Caco-2 (cell line): ENCODE measurements at regions of chrX and their contacts with region 1.

Region 1: DNA sequence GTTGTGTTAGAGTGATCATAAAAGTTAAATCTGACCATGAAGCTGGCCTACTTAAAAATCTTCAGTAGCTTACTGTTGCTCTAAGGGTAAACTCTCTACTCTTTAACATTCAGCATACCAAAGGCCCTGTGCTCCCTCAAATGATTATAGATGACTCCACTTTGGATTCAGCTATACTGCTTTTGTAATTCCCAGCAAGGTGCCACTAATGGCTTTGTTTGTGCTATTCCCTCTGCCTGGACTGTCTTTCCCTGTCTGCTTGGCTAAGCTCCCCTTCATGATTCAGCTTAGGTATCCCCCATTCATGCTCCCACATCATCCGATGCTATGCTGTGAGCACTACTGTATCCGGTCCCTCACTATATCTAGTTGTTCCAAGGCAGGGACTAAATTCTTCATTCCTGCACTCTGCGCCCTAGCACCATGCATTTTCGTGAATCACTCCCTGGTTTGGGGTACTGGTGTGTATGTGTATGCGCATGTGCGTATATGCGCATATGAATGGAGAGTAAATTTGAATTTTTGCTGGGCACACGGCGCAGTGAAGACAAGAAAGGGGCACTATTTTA is 453 bp upstream of the PBDC1 start:
- DNase-seq: no peak
- H3K4me3 ChIP-seq: peak overlapping the region; percentile 73
- H3K4me3 Mint-ChIP-seq: peak overlapping the region; percentile 97
- H3K27ac Mint-ChIP-seq: peak overlapping the region; percentile 97
- H3K4me1 ChIP-seq: no peaks in the 10 kb centered on the region
- H3K4me1 Mint-ChIP-seq: no peaks in the 10 kb centered on the region
- H3K27me3 ChIP-seq: no peaks in the 10 kb centered on the region
- H3K27me3 Mint-ChIP-seq: no peaks in the 10 kb centered on the region
- CTCF ChIP-seq: no peak

Region 2: DNA sequence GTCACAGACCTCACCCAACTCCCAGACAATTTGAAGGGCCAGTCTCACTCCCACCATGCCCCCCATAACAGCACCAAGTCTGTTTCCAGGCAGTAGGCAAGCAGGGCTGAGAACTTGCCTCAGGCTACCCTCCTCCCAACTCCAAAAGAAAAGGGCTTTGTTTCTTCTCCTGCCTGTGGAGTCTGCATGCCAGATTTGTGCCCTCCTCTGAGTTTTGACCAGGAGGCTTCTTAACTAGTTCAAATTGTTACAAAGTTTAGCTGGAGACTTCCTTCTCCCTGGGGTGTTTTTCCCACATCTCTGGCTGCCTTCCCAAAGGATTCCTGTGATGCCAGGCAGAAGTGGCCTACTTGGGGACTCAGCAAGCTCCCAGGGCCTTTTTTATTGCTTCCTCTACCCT is 30.1 kb after region 1 on chrX:
- CTCF ChIA-PET with region 1: no interaction called
- POLR2A ChIA-PET with region 1: no interaction called
- intact Hi-C with region 1: loop called (anchors 2 kb)
- DNase-seq: no peak
- H3K4me3 ChIP-seq: no peak overlapping the region
- H3K4me3 Mint-ChIP-seq: no peak overlapping the region
- H3K27ac Mint-ChIP-seq: no peak overlapping the region
- H3K4me1 ChIP-seq: peaks cover 3% of the 10 kb centered on the region
- H3K4me1 Mint-ChIP-seq: no peaks in the 10 kb centered on the region
- H3K27me3 ChIP-seq: no peaks in the 10 kb centered on the region
- H3K27me3 Mint-ChIP-seq: no peaks in the 10 kb centered on the region
- CTCF ChIP-seq: no peak

Region 3: DNA sequence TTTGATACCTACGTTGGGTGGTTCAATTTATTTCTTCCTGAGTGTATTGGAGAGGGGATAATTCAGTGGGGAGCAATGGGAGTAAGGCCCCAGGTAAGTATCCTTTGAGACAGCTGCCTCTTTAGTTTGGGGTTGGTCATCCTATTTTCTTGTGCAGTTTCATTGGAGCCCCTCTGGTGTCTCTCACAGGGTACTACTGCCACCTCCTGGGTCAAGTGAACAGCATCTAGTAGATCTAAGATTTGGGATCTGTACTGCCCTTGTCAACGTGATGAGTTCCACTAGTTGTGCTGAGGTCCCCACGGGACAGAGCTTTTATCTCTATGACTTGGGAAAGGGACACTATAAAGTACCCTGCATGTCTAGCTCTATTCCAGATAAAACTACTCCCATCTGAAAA is 81.0 kb after region 1 on chrX:
- CTCF ChIA-PET with region 1: interaction called, 3 read pairs
- POLR2A ChIA-PET with region 1: no interaction called
- intact Hi-C with region 1: loop called (anchors 5 kb)
- DNase-seq: peak; percentile 48 to 56
- H3K4me3 ChIP-seq: no peak overlapping the region
- H3K4me3 Mint-ChIP-seq: no peak overlapping the region
- H3K27ac Mint-ChIP-seq: no peak overlapping the region
- H3K4me1 ChIP-seq: no peaks in the 10 kb centered on the region
- H3K4me1 Mint-ChIP-seq: no peaks in the 10 kb centered on the region
- H3K27me3 ChIP-seq: no peaks in the 10 kb centered on the region
- H3K27me3 Mint-ChIP-seq: peaks cover 4% of the 10 kb centered on the region
- CTCF ChIP-seq: peak; percentile 32 to 50